ENCODE measurements at regions of chr17 and their contacts with region 1.

Region 1: GRCh38 chr17:41738077-41738735 is 3.8 kb upstream of the HAP1 start:
- DNase-seq: peak; percentile 75 to 88 (median 76)
- ATAC-seq: peak; percentile 70 to 91 (median 88)
- H3K4me3 ChIP-seq: no peak overlapping the region
- H3K27ac ChIP-seq: no peak overlapping the region
- H3K4me1 ChIP-seq: peaks cover 3 to 25% (median 16%) of the 10 kb centered on the region in 12 donors
- H3K27me3 ChIP-seq: peaks cover 28 to 47% (median 43%) of the 10 kb centered on the region in 9 donors
- CTCF ChIP-seq: peak; percentile 97 to 100 (median 98)
- POLR2A ChIP-seq: no peak

Region 2: GRCh38 chr17:41688699-41689496 is 49.3 kb before region 1 on chr17 and contains the start of gene EIF1:
- intact Hi-C with region 1: no loop called
- DNase-seq: peak; percentile 100
- ATAC-seq: peak; percentile 89 to 91 (median 90)
- H3K4me3 ChIP-seq: peak within 1 kb of the TSS; percentile 56 to 99 (median 87)
- H3K27ac ChIP-seq: peak within 1 kb of the TSS; percentile 99 to 100 (median 100)
- H3K4me1 ChIP-seq: peaks cover 11 to 38% (median 32%) of the 10 kb centered on the region in 12 donors
- H3K27me3 ChIP-seq: no peaks in the 10 kb centered on the region
- CTCF ChIP-seq: no peak
- POLR2A ChIP-seq: peak; percentile 91 to 100
- total RNA-seq, gene EIF1: 402 to 1,338 (median 1,177) TPM

Region 3: GRCh38 chr17:41777574-41778188 is 39.5 kb after region 1 on chr17:
- intact Hi-C with region 1: loop called in 2 of 10 experiments (anchors 2 to 5 kb)
- DNase-seq: peak; percentile 88 to 91 (median 89)
- ATAC-seq: peak; percentile 27 to 64 (median 50)
- H3K4me3 ChIP-seq: peak overlapping the region in 3 of 12 donors; percentile 5 to 22 (median 12)
- H3K27ac ChIP-seq: peak overlapping the region; percentile 83 to 97 (median 95)
- H3K4me1 ChIP-seq: peaks cover 44 to 100% (median 96%) of the 10 kb centered on the region in 12 donors
- H3K27me3 ChIP-seq: no peaks in the 10 kb centered on the region
- CTCF ChIP-seq: peak in 3 of 12 donors; percentile 8 to 13 (median 10)
- POLR2A ChIP-seq: peak in 1 of 2 donors; percentile 59

Region 4: DNA sequence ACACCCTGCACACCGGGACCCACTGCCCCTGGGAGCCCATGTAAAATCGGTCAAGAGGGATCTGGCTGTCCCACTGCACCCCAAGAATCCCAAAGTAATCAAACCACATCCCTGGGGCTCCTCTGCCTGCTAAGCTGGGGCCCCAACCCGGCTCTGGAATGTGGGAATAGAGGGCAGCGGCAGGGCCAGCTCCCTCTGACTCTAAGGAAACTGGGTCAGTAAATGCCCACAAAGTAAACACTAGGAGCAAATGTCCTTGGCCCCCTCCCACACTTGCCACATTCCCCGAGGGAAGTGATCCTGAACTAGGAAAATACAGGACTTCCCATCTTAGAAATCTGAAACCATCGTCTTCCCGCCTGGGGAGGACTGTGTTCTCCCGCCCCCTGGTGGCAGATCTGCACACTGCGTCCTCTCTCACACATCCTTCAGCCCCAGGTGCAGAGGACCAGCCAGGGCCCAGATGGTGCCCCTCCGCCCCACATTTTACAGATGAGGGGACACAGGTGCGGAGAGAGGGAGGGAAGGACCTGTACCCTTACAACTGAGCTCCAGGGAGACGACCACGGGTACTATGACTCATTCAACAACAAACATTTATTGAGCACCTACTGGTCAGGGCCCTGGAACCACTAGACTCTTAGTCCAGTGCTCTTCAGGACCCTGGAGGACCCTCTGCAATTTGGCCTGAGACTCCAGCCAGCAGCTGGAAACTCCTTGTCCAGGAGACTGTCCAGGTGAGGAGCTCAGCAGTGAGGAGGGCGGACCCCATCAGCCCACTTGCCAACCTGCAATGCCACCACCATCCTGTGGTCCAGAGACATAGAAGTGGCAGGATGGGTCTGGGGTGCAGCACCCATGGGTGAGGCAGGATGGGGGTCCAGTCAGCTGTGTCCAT is 63.4 kb after region 1 on chr17:
- intact Hi-C with region 1: loop called (anchors 1 to 2 kb)
- DNase-seq: peak; percentile 74 to 90 (median 83)
- ATAC-seq: peak; percentile 79 to 89 (median 84)
- H3K4me3 ChIP-seq: peak overlapping the region in 3 of 12 donors; percentile 24 to 34 (median 29)
- H3K27ac ChIP-seq: peak overlapping the region in 1 of 12 donors; percentile 54
- H3K4me1 ChIP-seq: peaks cover 0 to 11% (median 10%) of the 10 kb centered on the region in 12 donors
- H3K27me3 ChIP-seq: no peaks in the 10 kb centered on the region
- CTCF ChIP-seq: peak; percentile 93 to 99 (median 97)
- POLR2A ChIP-seq: no peak

Region 5: DNA sequence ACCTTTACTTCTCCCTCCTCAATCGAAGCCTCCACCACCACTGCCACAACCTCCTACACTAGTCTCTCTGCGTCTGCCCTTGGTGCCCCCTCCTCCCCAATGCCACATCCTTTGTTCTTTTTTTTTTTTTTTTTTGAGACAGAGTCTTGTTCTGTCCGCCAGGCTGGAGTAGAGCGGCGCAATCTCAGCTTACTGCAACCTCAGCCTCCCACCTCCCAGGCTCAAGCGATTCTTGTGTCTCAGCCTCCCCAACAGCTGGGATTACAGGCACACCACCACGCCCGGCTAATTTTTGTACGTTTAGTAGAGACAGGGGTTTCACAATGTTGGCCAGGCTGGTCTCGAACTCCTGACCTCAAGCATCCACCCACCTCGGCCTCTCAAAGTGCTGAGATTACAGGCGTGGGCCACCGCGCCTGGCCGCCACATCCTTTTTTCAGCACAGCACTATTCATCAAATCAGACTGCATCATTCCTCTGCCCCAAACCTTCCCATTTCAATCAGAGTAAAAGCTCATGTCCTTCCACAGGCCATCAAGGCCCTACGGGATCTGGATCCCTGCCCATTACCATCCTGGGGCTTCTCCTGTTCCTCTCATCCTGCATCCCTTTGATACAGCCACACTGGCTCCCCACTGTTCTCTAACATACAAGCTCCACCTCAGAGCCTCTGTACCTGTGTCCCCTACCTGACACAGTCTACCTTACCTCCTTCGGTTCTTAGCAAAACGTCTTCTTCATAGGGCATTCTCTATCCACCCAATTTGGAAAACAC is 125.1 kb after region 1 on chr17:
- intact Hi-C with region 1: no loop called
- DNase-seq: no peak
- ATAC-seq: no peak
- H3K4me3 ChIP-seq: peak overlapping the region in 9 of 12 donors; percentile 77 to 100 (median 96)
- H3K27ac ChIP-seq: no peak overlapping the region
- H3K4me1 ChIP-seq: peaks cover 0 to 52% (median 32%) of the 10 kb centered on the region in 12 donors
- H3K27me3 ChIP-seq: no peaks in the 10 kb centered on the region
- CTCF ChIP-seq: no peak
- POLR2A ChIP-seq: no peak

Region 6: GRCh38 chr17:41885733-41886132 is 147.5 kb after region 1 on chr17:
- intact Hi-C with region 1: loop called in 2 of 10 experiments (anchors 5 to 10 kb)
- DNase-seq: no peak
- ATAC-seq: no peak
- H3K4me3 ChIP-seq: no peak overlapping the region
- H3K27ac ChIP-seq: no peak overlapping the region
- H3K4me1 ChIP-seq: no peaks in the 10 kb centered on the region
- H3K27me3 ChIP-seq: no peaks in the 10 kb centered on the region
- CTCF ChIP-seq: peak in 5 of 12 donors; percentile 3 to 31 (median 14)
- POLR2A ChIP-seq: no peak

Region 7: GRCh38 chr17:41959336-41960095 is 221.3 kb after region 1 on chr17:
- intact Hi-C with region 1: loop called in 1 of 10 experiments (anchors 10 kb)
- DNase-seq: peak in 1 of 5 donors; percentile 26
- ATAC-seq: peak; percentile 28 to 59 (median 40)
- H3K4me3 ChIP-seq: no peak overlapping the region
- H3K27ac ChIP-seq: no peak overlapping the region
- H3K4me1 ChIP-seq: peaks cover 0 to 8% (median 5%) of the 10 kb centered on the region in 12 donors
- H3K27me3 ChIP-seq: no peaks in the 10 kb centered on the region
- CTCF ChIP-seq: peak in 8 of 12 donors; percentile 11 to 41 (median 34)
- POLR2A ChIP-seq: no peak

Measured in heart left ventricle (tissue), 16 donors.